KBM-7 (cell line): ENCODE measurements at regions of chr14 and their contacts with region 1.

Region 1: GRCh38 chr14:75709207-75709812 is 48.3 kb downstream of the TTLL5 start:
- DNase-seq: peak; percentile 80

Region 2: DNA sequence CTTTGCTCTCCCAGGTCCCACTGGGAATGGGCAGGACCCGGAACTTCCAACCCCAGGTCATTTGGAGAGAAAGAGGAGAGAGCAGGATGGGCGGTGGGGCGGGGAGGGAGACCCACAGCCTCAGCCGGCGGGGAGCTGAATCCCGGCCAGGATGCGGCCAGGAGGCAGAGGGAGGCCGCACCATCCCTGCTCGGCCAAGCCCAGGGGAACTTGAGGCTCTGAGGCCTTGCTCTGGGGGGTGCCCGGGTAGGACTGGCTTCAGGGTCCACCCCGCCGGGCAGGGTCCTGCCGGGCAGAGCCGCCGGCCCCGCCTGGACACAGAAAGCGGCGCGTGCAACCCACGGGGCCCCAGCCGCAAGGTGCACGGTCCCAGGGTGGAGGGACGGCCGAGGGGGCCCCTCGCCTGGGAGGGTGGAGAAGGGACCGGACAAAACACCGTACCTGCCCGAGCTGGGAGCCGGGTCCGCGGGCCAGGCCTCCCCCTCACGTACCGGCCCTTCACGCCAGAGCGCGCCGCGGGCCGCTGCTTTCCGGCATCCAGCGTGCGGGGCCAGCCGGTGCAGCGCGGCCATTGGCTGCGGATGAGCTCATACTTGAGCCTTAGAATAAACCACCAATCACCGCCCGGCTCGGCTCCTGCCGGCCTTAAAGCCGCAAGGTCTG is 786.4 kb before region 1 on chr14 and contains the start of gene RPS6KL1:
- in situ Hi-C with region 1: no loop called
- DNase-seq: peak; percentile 76

Region 3: DNA sequence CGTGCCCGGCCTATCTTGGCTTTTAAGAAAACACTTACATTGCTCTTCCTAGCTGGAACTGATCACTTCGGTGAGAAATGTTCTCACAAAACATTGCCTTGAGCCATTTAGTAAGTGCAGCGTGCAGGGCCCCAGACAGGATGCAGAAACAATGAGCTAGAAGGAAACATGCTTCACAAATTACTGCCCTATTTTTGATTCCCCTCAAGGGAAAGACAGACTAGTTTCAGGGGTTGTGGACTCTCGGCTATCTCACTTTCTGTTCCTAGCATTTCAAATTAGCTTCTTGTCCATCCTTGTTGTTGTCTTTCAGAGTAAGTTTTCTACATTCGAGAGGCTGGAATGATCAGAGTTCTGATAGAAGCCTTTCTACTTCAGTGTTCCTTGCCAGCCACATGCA is 250.9 kb after region 1 on chr14:
- in situ Hi-C with region 1: loop called (anchors 25 kb)
- DNase-seq: no peak